ENCODE measurements at regions of chr5 and their contacts with region 1.

Region 1: DNA sequence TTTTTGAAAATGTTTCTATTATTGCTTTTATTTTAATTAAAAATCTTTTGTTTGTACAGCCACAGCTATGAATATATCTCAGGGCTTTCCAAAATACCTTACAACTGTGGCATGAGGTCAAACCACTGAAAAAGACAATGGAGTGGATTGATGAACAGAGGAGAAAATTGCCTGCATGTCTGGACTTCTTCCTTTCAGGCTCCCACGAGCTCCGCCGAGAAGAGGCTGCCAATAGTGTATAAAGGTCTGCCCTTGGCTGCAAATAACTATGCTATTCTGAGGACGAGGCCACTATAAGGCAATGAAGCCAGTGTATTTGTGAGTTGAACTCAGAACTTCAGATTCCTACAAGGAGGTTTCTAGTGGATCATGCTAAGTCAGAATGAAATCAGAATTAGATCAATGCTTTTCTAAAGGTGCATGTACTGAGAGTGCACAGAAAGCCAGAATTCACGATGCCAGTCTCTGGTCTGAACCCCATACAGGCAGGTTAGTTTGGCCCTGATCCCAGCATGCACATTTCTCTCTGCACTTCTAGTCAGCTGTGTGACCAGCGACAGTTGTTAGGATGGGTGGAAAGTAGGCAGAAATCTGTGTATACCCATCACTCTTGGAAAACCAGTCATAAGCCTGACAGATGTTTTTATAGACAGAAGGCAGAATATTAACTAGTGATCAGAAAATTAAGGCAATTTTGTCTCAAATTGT is 42.7 kb upstream of the PLPP1 start:
- DNase-seq: no peak
- H3K4me3 Mint-ChIP-seq: no peak overlapping the region
- H3K27ac Mint-ChIP-seq: peak overlapping the region; percentile 65
- H3K4me1 Mint-ChIP-seq: peaks cover 48% of the 10 kb centered on the region
- H3K27me3 Mint-ChIP-seq: no peaks in the 10 kb centered on the region

Region 2: GRCh38 chr5:54944364-54944763 is 633.1 kb before region 1 on chr5:
- intact Hi-C with region 1: no loop called
- DNase-seq: no peak
- H3K4me3 Mint-ChIP-seq: no peak overlapping the region
- H3K27ac Mint-ChIP-seq: no peak overlapping the region
- H3K4me1 Mint-ChIP-seq: peaks cover 22% of the 10 kb centered on the region
- H3K27me3 Mint-ChIP-seq: no peaks in the 10 kb centered on the region

Region 3: GRCh38 chr5:55546947-55547346 is 30.6 kb before region 1 on chr5:
- intact Hi-C with region 1: no loop called
- DNase-seq: no peak
- H3K4me3 Mint-ChIP-seq: no peak overlapping the region
- H3K27ac Mint-ChIP-seq: no peak overlapping the region
- H3K4me1 Mint-ChIP-seq: peaks cover 12% of the 10 kb centered on the region
- H3K27me3 Mint-ChIP-seq: peaks cover 2% of the 10 kb centered on the region

Region 4: DNA sequence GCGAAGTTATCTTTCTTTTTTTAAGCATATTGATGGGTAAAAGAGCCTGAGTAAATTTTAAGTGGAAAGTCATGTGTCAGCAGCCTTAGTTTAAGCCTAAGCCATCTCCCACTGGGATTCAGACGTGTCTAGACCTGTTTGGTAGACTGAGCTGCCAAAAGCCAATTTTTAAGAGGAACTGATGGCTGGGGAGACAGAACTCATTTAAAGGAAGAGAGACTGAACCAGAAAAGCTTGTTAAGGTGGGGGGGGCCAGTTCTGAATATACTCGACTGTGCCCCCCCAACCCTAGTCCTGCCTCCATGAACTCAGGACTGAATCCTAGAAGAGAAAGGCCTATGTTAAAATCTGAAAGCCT is 15.6 kb after region 1 on chr5:
- intact Hi-C with region 1: loop called (anchors 1 kb)
- DNase-seq: no peak
- H3K4me3 Mint-ChIP-seq: no peak overlapping the region
- H3K27ac Mint-ChIP-seq: peak overlapping the region; percentile 56
- H3K4me1 Mint-ChIP-seq: peaks cover 57% of the 10 kb centered on the region
- H3K27me3 Mint-ChIP-seq: no peaks in the 10 kb centered on the region

Region 5: DNA sequence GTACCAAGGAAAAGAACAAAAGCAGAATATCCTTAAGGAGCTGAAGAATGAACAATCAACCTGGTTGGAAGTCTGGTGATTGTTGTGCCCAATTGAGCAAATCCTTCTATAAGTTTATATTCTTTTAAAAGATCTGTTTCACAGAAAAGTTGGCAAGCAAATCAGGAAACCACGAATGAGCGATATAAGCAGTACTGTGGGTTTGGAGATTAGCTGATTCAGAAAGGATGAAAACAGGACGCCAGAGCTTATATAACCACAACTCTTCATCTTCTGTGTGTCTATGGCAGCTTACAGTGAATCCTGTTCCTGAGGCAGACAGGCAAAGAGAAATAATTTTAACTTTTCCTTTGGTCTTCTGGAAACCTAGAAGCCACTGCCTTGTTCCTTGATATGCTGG is 72.9 kb after region 1 on chr5:
- intact Hi-C with region 1: no loop called
- DNase-seq: no peak
- H3K4me3 Mint-ChIP-seq: peak overlapping the region; percentile 43
- H3K27ac Mint-ChIP-seq: peak overlapping the region; percentile 29
- H3K4me1 Mint-ChIP-seq: peaks cover 28% of the 10 kb centered on the region
- H3K27me3 Mint-ChIP-seq: no peaks in the 10 kb centered on the region

Measured in activated T-helper 2 cell treated with anti-CD3 and anti-CD28 coated beads, Interferon-gamma antibody, Interleukin-2, Interleukin-4, amounts not matched to agents 10 μg/mL and 5 μg/mL and 100 μg/mL, durations not matched to agents 14 hours and 24 hours and 36 hours (primary cell).